ENCODE measurements at regions of chr7 and their contacts with region 1.

Region 1: DNA sequence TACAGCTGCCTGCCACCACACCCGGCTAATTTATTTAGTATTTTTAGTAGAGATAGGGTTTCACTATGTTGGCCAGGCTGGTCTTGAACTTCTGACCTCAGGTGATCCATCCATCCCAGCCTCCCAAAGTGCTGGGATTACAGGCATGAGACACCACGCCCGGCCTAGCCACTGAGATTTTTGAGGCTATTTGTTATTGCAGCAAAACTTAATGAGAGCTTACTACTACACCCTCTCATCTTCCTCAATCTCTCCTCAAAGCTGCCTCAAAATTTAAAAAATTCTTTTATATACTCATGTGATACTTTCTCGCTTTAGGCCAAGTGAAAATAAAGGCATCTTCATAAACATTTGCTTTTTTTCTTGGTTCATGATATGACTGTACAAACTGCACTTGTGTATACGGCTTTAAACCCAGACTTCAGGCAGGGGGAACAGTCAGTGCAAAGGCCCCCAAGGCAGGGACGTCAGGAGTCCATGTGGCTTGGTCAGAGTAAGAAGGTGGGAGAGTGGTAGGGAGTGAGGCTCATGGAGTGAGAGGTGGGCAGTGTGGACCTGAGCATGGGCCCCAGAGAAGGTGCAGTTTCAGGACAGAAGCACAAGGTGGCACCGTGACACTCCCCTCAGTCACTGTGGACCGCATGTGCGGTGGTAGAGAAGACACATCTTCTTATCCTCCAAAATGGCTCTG is 55.5 kb downstream of the SYPL1 start:
- DNase-seq: peak in 1 of 2 donors; percentile 80
- H3K4me3 ChIP-seq: no peak overlapping the region
- H3K27ac ChIP-seq: no peak overlapping the region
- H3K4me1 ChIP-seq: no peaks in the 10 kb centered on the region
- H3K27me3 ChIP-seq: no peaks in the 10 kb centered on the region
- CTCF ChIP-seq: peak; percentile 84 to 89 (median 85)

Region 2: DNA sequence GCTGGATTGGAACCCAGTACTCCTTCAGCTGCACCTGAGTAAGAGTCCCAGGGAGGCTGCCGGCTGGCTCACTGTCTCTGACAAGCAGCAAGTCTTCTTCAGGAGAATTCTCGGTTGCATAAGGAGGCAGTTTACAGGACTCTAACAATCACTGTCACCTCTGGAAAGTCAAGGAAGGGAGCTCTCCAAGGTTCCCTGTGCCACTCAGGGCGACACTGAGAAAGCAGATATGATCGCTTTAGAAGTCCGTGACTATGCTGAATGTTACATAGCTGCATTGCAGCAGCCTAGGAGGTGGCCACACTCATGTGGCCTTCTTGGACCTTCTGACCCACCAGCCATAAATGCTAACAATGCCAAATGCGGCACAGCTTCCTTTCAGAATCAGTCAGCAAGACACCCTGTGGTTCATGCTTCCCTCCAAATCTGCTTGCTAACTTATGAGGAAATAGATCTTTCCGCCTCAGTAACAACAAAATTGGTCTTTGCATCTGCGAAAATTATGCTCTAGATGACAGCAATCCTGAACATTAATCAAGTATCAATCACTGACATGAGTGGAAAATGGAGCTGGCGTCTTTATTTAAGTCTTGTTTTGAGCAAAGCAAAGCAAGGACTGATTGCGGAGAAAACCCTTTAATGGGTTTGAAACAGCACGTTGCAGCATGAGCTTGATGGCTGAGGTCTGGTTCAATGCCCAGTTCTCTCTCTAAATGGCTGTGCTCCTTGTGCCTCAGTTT is 313.1 kb before region 1 on chr7:
- intact Hi-C with region 1: no loop called
- DNase-seq: no peak
- H3K4me3 ChIP-seq: no peak overlapping the region
- H3K27ac ChIP-seq: no peak overlapping the region
- H3K4me1 ChIP-seq: no peaks in the 10 kb centered on the region
- H3K27me3 ChIP-seq: no peaks in the 10 kb centered on the region
- CTCF ChIP-seq: no peak

Region 3: GRCh38 chr7:106153891-106154449 is 97.3 kb after region 1 on chr7:
- intact Hi-C with region 1: loop called (anchors 1 kb)
- DNase-seq: peak in 1 of 2 donors; percentile 89
- H3K4me3 ChIP-seq: no peak overlapping the region
- H3K27ac ChIP-seq: no peak overlapping the region
- H3K4me1 ChIP-seq: no peaks in the 10 kb centered on the region
- H3K27me3 ChIP-seq: no peaks in the 10 kb centered on the region
- CTCF ChIP-seq: peak; percentile 85 to 96 (median 91)

Region 4: DNA sequence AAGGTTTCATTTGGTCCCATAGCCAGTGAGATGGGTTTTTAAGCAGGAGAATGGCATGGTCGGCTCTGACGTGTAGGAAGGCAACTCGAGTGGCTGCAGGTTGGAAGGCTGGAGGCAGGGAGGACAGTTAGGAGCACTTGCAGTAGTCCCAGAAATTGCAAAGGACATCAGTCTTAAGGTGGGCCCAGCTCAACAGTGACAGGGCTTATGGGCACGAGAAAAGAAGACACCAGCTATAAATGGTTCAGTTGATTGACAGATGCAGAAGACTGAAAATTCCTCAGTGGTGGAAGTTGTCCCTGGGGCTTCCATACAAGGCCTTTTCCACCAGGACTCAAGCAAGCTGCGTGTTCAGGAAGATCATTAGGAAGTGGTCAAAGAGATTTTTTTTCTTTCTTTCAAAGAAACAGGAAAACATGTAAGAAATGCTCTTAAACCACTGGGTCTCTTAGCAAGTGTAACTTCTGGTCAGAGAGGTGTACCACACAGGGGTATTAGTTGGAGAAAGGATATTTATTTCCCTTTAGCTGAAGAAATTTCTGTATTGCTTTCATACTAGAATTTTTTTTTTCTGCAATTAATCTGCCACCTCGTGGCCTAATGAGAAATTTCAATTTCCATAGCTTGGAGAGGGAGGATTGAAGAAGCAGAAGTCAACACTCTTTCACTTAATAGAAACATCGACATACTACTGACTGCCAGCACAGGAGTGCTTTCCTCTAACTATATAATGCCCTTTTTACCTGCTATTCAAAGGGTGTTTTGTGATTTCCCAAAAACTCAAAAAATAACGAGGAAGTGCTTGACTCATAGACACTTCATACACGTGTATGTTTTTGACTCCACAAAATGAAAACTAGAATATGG is 405.6 kb after region 1 on chr7:
- intact Hi-C with region 1: loop called (anchors 10 kb)
- DNase-seq: no peak
- H3K4me3 ChIP-seq: no peak overlapping the region
- H3K27ac ChIP-seq: no peak overlapping the region
- H3K4me1 ChIP-seq: no peaks in the 10 kb centered on the region
- H3K27me3 ChIP-seq: no peaks in the 10 kb centered on the region
- CTCF ChIP-seq: peak; percentile 26 to 57 (median 42)

Measured in ascending aorta (tissue), 2 donors.